MCF 10A (cell line): ENCODE measurements at regions of chr6 and their contacts with region 1.

Region 1: DNA sequence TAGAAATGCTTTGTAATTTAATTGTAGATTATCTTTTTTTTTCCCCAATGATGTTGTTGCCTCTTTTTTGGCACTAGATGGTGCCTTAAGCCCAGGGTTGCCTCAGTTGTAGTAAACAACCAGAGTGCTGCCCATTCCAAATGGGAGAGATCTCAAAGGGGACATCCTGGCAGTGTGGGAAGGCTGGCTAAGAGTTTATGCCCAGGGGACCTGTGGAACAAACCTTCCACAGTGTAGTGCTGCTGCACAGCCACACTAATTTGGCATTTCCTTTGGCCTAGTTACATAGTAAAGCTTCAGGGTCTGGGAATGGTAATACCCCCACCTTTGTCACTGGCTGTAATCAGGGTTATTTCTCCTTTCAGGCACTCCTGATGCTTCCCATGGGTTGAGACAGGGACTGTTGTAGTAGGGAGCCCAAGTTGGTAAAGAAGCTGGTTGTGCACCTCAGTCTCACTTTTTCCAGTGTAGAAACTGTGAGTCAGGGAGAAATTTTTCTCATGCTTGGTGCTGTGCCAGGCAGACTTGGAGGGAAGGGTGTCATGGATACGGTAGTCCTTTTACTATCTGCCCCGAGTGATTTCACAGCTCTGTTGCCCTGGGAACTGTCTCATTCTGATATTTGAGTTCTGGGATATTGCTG is 177.8 kb upstream of the ECI2 start:
- DNase-seq: peak; percentile 94
- H3K4me3 Mint-ChIP-seq: peak overlapping the region; percentile 52
- H3K27ac Mint-ChIP-seq: peak overlapping the region; percentile 87
- H3K4me1 Mint-ChIP-seq: peaks cover 20% of the 10 kb centered on the region
- H3K27me3 Mint-ChIP-seq: no peaks in the 10 kb centered on the region
- CTCF ChIP-seq: peak; percentile 66

Region 2: DNA sequence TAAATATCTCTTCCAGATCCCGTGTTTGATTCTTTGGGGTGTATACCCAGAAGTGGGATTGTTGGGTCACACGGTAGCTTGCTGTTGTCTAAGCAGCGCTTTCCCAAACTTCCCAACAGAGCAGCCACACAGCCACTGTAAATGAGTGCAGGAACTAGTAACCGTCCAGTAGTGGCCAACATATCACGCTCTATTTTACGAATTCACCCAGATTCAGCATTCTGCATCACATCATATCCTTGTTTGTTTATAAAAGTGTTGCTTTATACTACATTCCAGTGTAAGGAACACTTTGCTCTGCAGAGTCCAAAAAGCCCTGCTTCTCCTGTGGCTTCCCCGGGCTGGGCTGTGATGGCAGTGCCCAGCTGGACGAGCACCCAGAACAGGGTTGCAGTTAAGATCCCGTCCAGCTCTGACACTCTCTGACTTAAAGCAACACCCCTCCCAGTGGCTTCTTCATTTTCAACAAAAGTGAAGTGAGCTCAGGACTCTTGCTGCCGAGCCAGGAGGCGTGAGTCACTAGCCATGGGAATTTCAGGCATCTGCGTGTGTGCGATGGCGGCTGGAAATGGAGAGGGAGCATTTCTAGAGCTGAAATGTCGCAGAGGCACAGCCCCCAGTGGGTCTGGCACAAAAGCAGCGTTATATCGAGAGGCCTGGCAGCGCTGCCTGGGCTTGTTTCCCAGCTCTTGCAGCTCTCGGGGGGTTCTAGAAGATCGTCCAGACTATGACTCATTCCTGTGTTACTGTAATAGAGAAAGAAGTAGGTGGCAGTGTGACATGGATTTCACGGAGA is 38.6 kb after region 1 on chr6:
- CTCF ChIA-PET with region 1: interaction called, 6 read pairs
- POLR2A ChIA-PET with region 1: interaction called, 5 read pairs
- intact Hi-C with region 1: loop called (anchors 1 kb)
- DNase-seq: peak; percentile 89
- H3K4me3 Mint-ChIP-seq: peak overlapping the region; percentile 66
- H3K27ac Mint-ChIP-seq: peak overlapping the region; percentile 84
- H3K4me1 Mint-ChIP-seq: peaks cover 42% of the 10 kb centered on the region
- H3K27me3 Mint-ChIP-seq: no peaks in the 10 kb centered on the region
- CTCF ChIP-seq: no peak

Region 3: DNA sequence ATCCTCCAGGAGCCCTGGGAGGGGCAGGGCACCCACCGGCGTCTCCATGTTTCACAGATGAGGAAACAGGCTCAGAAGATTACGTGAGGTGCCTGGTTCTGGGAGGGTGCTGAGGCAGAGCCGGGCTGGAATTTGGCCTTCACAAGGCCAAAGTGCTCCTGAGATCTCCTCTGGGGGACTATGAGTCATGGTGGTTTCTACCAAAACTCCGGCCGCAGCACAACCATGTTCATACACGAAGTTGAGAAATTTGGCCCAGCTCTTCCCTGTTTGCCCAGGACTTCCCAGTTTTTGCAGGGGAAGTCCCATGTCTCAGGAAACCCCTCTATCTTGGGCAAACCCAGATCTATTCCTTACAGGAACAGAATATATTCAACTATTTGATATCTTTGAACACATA is 290.1 kb after region 1 on chr6:
- CTCF ChIA-PET with region 1: no interaction called
- POLR2A ChIA-PET with region 1: no interaction called
- intact Hi-C with region 1: loop called (anchors 5 kb)
- DNase-seq: peak; percentile 99
- H3K4me3 Mint-ChIP-seq: peak overlapping the region; percentile 51
- H3K27ac Mint-ChIP-seq: peak overlapping the region; percentile 93
- H3K4me1 Mint-ChIP-seq: peaks cover 48% of the 10 kb centered on the region
- H3K27me3 Mint-ChIP-seq: no peaks in the 10 kb centered on the region
- CTCF ChIP-seq: no peak

Region 4: GRCh38 chr6:4805553-4806336 is 492.6 kb after region 1 on chr6:
- CTCF ChIA-PET with region 1: interaction called, 6 read pairs
- POLR2A ChIA-PET with region 1: no interaction called
- intact Hi-C with region 1: loop called (anchors 1 kb)
- DNase-seq: peak; percentile 63
- H3K4me3 Mint-ChIP-seq: no peak overlapping the region
- H3K27ac Mint-ChIP-seq: no peak overlapping the region
- H3K4me1 Mint-ChIP-seq: peaks cover 30% of the 10 kb centered on the region
- H3K27me3 Mint-ChIP-seq: no peaks in the 10 kb centered on the region
- CTCF ChIP-seq: peak; percentile 62

Region 5: DNA sequence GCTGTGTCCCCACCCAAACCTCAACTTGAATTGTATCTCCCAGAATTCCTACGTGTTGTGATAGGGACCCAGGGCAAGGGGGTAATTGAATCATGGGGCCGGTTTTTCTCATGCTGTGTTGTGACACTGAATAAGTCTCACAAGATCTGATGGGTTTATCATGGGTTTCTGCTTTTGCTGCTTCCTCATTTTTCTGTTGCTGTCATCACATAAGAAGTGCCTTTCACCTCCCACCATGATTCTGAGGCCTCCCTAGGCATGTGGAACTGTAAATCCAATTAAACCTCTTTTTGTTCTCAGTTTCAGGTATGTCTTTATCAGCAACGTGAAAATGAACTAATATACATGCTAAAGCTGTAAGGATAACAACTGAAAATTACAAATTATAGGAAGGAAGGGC is 551.4 kb after region 1 on chr6:
- CTCF ChIA-PET with region 1: no interaction called
- POLR2A ChIA-PET with region 1: no interaction called
- intact Hi-C with region 1: no loop called
- DNase-seq: no peak
- H3K4me3 Mint-ChIP-seq: no peak overlapping the region
- H3K27ac Mint-ChIP-seq: no peak overlapping the region
- H3K4me1 Mint-ChIP-seq: peaks cover 6% of the 10 kb centered on the region
- H3K27me3 Mint-ChIP-seq: no peaks in the 10 kb centered on the region
- CTCF ChIP-seq: no peak

Region 6: DNA sequence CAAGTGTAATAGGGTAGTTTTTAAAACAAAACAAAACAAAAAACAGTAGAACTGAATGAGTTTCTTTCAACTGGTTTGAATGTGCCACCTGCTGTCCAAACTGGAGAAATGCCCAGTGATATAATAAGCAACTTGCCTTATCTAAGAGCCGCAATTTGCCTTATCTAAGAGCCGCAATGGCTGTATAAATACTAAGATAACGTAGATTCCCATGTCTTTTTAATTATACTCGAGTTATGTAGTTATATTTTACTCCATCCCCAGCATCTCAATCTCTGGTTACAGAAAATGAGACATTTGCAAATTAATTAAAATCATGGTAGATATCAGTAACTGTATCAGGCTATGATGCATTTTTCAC is 623.5 kb after region 1 on chr6:
- CTCF ChIA-PET with region 1: interaction called, 8 read pairs
- POLR2A ChIA-PET with region 1: interaction called, 10 read pairs
- intact Hi-C with region 1: loop called (anchors 1 kb)
- DNase-seq: peak; percentile 34
- H3K4me3 Mint-ChIP-seq: no peak overlapping the region
- H3K27ac Mint-ChIP-seq: no peak overlapping the region
- H3K4me1 Mint-ChIP-seq: peaks cover 18% of the 10 kb centered on the region
- H3K27me3 Mint-ChIP-seq: no peaks in the 10 kb centered on the region
- CTCF ChIP-seq: peak; percentile 56

Region 7: DNA sequence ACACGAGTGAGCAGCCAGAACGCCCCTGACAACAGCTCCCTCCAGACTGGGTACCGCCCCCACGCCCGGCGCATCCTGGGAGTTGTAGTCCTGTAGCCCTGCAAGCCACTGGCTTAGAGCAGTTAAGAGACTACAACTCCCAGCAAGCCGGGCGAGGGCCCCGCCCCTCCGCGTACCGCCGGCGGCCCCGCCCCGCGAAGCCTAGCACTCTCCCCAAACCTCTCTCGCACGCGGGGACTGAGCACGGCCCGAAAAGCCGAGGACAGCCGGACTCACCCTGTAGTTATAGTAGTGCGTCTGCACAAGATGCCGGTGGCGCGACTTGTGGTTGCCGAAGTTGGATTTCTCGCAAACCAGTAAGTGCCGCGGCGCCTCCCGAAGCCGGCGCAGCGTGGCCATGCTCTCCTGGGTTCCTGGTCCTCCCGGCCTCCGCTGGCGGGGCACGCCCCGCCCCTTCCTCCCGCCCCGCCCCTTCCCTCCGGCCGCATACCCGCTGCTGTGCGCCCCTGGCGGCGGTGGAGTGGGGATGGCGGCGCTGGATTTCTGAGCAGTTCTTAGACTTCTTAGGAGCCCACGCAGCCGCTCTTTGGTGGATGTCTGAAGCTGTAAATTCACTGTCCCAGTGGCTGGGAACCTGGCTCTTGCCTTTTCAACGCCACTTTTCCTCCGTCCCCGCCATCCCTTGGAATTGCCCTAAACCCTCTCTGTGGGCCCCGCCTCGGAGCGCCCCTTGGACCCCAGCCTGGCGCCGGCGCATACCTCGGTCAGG is 690.6 kb after region 1 on chr6 and contains the start of gene RPP40:
- CTCF ChIA-PET with region 1: interaction called, 6 read pairs
- POLR2A ChIA-PET with region 1: interaction called, 3 read pairs
- intact Hi-C with region 1: loop called (anchors 2 kb)
- DNase-seq: peak; percentile 96
- H3K4me3 Mint-ChIP-seq: peak within 1 kb of the TSS; percentile 92
- H3K27ac Mint-ChIP-seq: peak within 1 kb of the TSS; percentile 88
- H3K4me1 Mint-ChIP-seq: no peaks in the 10 kb centered on the region
- H3K27me3 Mint-ChIP-seq: no peaks in the 10 kb centered on the region
- CTCF ChIP-seq: peak; percentile 72
- total RNA-seq, gene RPP40: 22.9 and 34.8 TPM in 2 replicates